ENCODE measurements at regions of chr3 and their contacts with region 1.

Region 1: DNA sequence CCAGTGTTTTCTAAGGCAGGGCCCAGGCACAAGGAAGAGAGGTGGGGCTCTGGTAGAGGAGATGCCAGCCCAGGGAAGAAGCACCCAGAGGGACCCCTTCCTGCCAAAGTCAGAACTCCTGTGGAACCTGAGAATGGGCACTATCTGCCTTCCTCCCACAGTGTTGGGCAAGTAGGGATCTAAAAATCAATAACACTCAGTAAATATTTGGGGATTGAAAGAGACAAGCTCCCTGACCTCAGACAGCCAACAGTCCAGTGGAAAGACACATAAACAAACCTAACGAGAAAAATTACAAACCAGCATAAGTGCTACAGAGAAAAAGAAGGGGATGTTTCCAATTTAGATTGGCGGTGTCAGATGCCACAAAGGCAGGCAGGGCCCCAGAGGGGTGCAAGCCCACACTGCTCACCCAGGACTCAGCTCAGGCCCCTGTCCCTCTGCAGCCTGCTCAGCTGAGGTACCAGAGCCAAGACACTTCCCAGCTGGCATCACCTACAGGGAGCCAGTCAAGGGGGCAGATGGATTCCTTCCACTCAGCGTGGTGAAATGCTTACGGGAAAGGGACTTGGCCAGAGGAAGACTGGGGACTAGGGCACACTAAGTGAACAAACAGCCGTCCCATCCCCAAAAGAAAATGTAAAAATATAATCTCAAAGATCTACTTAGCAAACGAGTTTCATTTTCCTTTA is 15.9 kb downstream of the ADCY5 start:
- H3K4me3 ChIP-seq: no peak overlapping the region
- H3K27ac ChIP-seq: no peak overlapping the region
- H3K4me1 ChIP-seq: peaks cover 5% of the 10 kb centered on the region; the same call in 1 of the 2 replicates
- CTCF ChIP-seq: no peak

Region 2: DNA sequence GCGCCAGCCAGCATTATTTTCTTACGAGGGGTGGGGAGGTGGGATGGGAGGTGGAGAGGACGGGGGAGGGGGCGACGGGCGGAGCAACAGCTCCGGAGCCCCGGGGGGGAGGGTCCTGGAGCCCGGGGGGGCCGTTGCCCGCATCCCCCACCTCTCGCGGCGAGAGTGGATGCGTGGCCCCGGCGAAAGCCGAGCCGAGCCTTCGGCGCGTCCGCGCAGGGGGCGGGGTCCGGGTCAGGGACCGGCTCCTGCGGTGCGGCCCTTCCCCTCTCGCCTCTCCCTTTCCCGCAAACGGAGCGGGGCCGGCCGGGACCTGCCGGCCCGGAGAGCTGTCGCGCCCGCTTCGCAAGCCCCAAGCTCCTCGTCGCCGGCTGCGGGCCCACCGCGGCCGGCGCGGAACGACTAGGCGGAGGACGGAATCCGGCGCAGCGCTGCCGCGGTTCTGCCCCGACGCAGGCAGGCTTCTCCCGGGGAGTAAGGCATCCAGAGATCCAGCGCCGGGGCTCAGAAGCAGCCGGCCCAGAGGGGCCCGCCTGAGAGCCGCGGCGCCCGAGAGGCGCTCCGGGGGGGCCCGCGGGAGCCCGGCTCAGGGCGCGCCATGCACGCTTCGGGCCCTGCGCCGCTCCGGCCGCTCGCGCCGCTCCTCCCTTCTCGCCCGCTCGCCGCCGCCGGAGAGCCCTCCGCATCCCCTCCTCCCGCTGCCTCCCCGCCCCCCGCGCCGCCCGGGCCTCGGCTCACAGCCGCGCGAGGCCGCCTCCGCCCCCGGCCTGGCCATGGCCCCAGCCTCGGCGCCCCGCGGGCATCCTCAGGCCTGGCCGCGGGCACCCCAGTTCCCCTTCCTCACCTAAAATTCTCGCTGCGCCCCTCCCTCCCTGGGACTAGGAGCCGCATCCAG is 16.4 kb after region 1 on chr3:
- CTCF ChIA-PET with region 1: interaction called, 13 read pairs
- POLR2A ChIA-PET with region 1: no interaction called
- H3K4me3 ChIP-seq: peak overlapping the region; percentile 35
- H3K27ac ChIP-seq: no peak overlapping the region; the same call in 1 of the 2 replicates
- H3K4me1 ChIP-seq: no peaks in the 10 kb centered on the region; the same call in 1 of the 2 replicates
- CTCF ChIP-seq: no peak

Region 3: GRCh38 chr3:123700791-123701722 is 268.1 kb after region 1 on chr3:
- CTCF ChIA-PET with region 1: no interaction called
- POLR2A ChIA-PET with region 1: no interaction called
- H3K4me3 ChIP-seq: no peak overlapping the region
- H3K27ac ChIP-seq: no peak overlapping the region
- H3K4me1 ChIP-seq: no peaks in the 10 kb centered on the region
- CTCF ChIP-seq: no peak

Measured in HEK293 (cell line).